A549 (cell line): ENCODE measurements at regions of chr11 and their contacts with region 1.

Region 1: GRCh38 chr11:85694386-85694980 is 8.5 kb upstream of the CCDC89 start:
- DNase-seq: peak; percentile 31 to 71
- ATAC-seq: peak; percentile 50 to 79; a peak in 5 of 6 replicates
- H3K4me3 ChIP-seq: no peak overlapping the region
- H3K27ac ChIP-seq: peak overlapping the region in 1 of 2 experiments; percentile 34; a peak in 2 of 6 replicates
- H3K4me1 ChIP-seq: peaks cover 15% of the 10 kb centered on the region
- CTCF ChIP-seq: peak; percentile 86
- EP300 ChIP-seq: no peak
- POLR2A ChIP-seq: no peak
- RAD21 ChIP-seq: peak; percentile 92 to 95

Region 2: GRCh38 chr11:85682330-85683305 is 11.9 kb before region 1 on chr11:
- CTCF ChIA-PET with region 1: interaction called, 22 read pairs
- POLR2A ChIA-PET with region 1: no interaction called
- DNase-seq: peak; percentile 22 to 27
- ATAC-seq: peak; percentile 75 to 82
- H3K4me3 ChIP-seq: peak overlapping the region; percentile 44
- H3K27ac ChIP-seq: peak overlapping the region; percentile 68 to 80
- H3K4me1 ChIP-seq: no peaks in the 10 kb centered on the region
- CTCF ChIP-seq: no peak
- EP300 ChIP-seq: no peak
- POLR2A ChIP-seq: no peak; the same call in 1 of the 2 replicates
- RAD21 ChIP-seq: no peak

Region 3: GRCh38 chr11:85718991-85719807 is 24.7 kb after region 1 on chr11:
- CTCF ChIA-PET with region 1: interaction called, 10 read pairs
- POLR2A ChIA-PET with region 1: no interaction called
- DNase-seq: peak; percentile 86 to 91
- ATAC-seq: peak; percentile 97
- H3K4me3 ChIP-seq: peak overlapping the region; percentile 41
- H3K27ac ChIP-seq: peak overlapping the region; percentile 66 to 77
- H3K4me1 ChIP-seq: peaks cover 55% of the 10 kb centered on the region
- CTCF ChIP-seq: no peak
- EP300 ChIP-seq: peak in 1 of 2 experiments; percentile 34; a peak in 1 of 5 replicates
- POLR2A ChIP-seq: no peak
- RAD21 ChIP-seq: peak in 1 of 2 experiments; percentile 8; a peak in 1 of 5 replicates

Region 4: DNA sequence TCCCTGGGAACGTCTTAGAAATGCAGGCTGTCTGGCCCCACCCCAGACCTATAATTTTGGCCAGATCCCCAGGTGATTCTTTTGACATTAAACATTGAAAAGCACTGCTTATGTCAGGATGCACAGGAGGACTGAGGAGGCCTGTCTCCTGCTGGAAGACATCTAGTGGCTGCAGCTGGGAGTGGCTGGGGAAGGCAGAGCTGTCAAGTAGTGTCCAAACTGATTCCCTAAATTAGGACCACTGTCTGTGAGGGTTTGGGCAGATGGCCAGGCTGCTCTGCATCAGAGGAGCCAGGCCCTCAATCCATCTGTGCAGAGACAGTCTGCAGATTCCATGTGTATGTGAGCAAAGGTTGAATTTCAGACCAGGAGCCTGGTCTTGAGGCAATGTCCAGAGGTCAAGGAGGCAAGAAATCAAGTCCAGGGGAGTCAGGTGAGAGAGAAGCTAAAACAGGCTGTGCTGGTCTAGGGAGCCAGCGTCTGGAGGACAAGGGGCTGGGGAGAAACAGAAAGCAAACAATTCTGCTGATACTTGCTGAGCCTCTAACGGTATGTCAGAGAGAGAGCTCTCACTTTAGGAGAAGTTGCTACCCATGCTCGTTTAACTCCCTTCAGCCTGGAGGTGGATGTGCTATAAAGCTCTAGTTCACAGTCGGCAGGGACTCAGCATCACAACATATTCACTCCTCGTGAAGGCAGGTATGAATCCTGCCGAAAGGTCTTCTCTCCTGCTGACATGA is 131.8 kb after region 1 on chr11:
- CTCF ChIA-PET with region 1: interaction called, 25 read pairs
- POLR2A ChIA-PET with region 1: no interaction called
- DNase-seq: peak; percentile 58 to 84
- ATAC-seq: peak; percentile 78 to 81
- H3K4me3 ChIP-seq: no peak overlapping the region
- H3K27ac ChIP-seq: peak overlapping the region; percentile 71 to 80; a peak in 4 of 6 replicates
- H3K4me1 ChIP-seq: peaks cover 62% of the 10 kb centered on the region
- CTCF ChIP-seq: peak; percentile 60
- EP300 ChIP-seq: no peak
- POLR2A ChIP-seq: no peak
- RAD21 ChIP-seq: peak; percentile 59 to 74